ENCODE measurements at regions of chr22 and their contacts with region 1.

Region 1: GRCh38 chr22:22408731-22409696 is 99.5 kb downstream of the ZNF280B start:
- DNase-seq: peak; percentile 69
- ATAC-seq: peak; percentile 43
- H3K4me3 ChIP-seq: peak overlapping the region in 1 of 5 experiments; percentile 21
- H3K4me3 Mint-ChIP-seq: peak overlapping the region; percentile 74
- H3K27ac ChIP-seq: peak overlapping the region in 1 of 2 donors; percentile 60
- H3K27ac Mint-ChIP-seq: peak overlapping the region; percentile 53
- H3K4me1 ChIP-seq: peaks cover 39 to 61% of the 10 kb centered on the region in 2 donors
- H3K4me1 Mint-ChIP-seq: peaks cover 61% of the 10 kb centered on the region
- H3K27me3 ChIP-seq: no peaks in the 10 kb centered on the region
- H3K27me3 Mint-ChIP-seq: no peaks in the 10 kb centered on the region
- CTCF ChIP-seq: no peak

Region 2: DNA sequence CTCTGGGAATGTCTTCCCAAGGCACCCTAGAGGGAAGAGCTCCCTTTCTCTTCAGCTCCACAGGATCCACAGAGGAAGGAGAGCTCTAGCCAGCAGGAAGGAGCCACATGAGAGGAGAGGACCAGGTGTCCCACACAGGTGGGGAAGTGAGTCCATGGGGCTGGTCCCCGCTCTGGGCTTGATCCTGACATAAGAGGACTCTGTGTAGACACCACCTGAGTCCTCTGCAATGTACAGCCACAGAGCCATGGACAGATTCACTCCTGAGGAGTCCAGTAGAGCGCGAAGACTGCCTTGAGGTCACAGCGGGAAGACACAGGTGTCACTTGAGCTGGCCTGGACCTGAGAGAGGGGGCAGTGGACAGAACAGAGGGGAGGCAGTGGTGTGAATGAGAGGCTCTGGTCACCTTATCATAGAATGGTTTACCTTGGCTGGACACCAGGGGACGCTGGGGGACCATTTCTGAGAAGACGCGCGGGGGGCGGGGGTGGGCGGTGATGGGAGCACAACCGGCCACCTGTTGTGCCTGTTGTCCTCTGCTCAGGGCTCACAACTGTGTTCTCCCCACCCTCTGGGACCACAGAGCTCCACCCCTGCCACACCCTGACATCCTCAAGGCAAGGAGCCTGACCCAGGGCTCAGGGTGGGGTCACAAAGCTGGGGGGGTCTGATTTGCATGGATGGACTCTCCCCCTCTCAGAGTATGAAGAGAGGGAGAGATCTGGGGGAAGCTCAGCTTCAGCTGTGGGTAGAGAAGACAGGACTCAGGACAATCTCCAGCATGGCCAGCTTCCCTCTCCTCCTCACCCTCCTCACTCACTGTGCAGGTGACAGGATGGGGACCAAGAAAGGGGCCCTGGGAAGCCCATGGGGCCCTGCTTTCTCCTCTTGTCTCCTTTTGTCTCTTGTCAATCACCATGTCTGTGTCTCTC is 28.6 kb before region 1 on chr22:
- CTCF ChIA-PET with region 1: interaction called, 17 read pairs
- POLR2A ChIA-PET with region 1: no interaction called
- intact Hi-C with region 1: no loop called
- DNase-seq: peak; percentile 87
- ATAC-seq: peak; percentile 88
- H3K4me3 ChIP-seq: peak overlapping the region in 1 of 5 experiments; percentile 15
- H3K4me3 Mint-ChIP-seq: peak overlapping the region; percentile 77
- H3K27ac ChIP-seq: peak overlapping the region; percentile 60 to 72
- H3K27ac Mint-ChIP-seq: peak overlapping the region; percentile 94
- H3K4me1 ChIP-seq: peaks cover 59 to 69% of the 10 kb centered on the region in 2 donors
- H3K4me1 Mint-ChIP-seq: peaks cover 79% of the 10 kb centered on the region
- H3K27me3 ChIP-seq: no peaks in the 10 kb centered on the region
- H3K27me3 Mint-ChIP-seq: no peaks in the 10 kb centered on the region
- CTCF ChIP-seq: peak; percentile 66

Region 3: DNA sequence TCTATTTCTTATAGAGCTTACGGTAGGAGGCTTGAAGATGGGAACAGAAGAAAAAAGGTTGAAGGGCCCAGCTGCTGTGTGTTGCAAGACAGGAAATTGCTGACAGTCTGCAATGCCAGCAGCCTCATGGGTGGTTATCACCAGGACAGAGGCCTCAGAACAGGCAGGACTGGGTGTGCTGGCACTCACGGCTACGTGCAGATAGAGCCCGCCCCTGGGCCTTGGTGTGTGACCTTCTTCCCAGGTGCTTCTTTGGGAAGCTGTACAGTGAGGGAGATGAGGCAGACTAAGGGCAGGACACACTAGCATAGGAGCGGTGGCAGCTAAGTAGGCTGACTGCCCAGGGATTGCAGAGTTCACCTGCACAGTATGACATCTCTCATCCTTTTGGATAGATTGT is 137.5 kb after region 1 on chr22:
- CTCF ChIA-PET with region 1: no interaction called
- POLR2A ChIA-PET with region 1: no interaction called
- intact Hi-C with region 1: no loop called
- DNase-seq: no peak
- ATAC-seq: no peak
- H3K4me3 ChIP-seq: no peak overlapping the region
- H3K4me3 Mint-ChIP-seq: no peak overlapping the region
- H3K27ac ChIP-seq: no peak overlapping the region
- H3K27ac Mint-ChIP-seq: no peak overlapping the region
- H3K4me1 ChIP-seq: peaks cover 0 to 12% of the 10 kb centered on the region in 2 donors
- H3K4me1 Mint-ChIP-seq: peaks cover 10% of the 10 kb centered on the region
- H3K27me3 ChIP-seq: no peaks in the 10 kb centered on the region
- H3K27me3 Mint-ChIP-seq: peaks cover 6% of the 10 kb centered on the region
- CTCF ChIP-seq: no peak

Measured in B cell (primary cell).